ENCODE measurements at regions of chr12 and their contacts with region 1.

Region 1: GRCh38 chr12:12999959-13000615 is at the start of gene HEBP1:
- DNase-seq: peak; percentile 99
- ATAC-seq: peak; percentile 92
- H3K4me3 Mint-ChIP-seq: peak within 1 kb of the TSS; percentile 86
- H3K27ac Mint-ChIP-seq: peak within 1 kb of the TSS; percentile 75
- H3K4me1 Mint-ChIP-seq: peaks cover 28% of the 10 kb centered on the region
- H3K27me3 Mint-ChIP-seq: peaks cover 6% of the 10 kb centered on the region
- total RNA-seq, gene HEBP1: 23.5 to 28.6 TPM

Region 2: GRCh38 chr12:12356886-12357718 is 643.0 kb before region 1 on chr12 and contains the start of gene BORCS5:
- CTCF ChIA-PET with region 1: no interaction called
- POLR2A ChIA-PET with region 1: no interaction called
- intact Hi-C with region 1: loop called in 1 of 2 experiments (anchors 1 kb)
- DNase-seq: peak; percentile 99
- ATAC-seq: peak; percentile 94
- H3K4me3 Mint-ChIP-seq: peak within 1 kb of the TSS; percentile 98
- H3K27ac Mint-ChIP-seq: peak within 1 kb of the TSS; percentile 99
- H3K4me1 Mint-ChIP-seq: peaks cover 38% of the 10 kb centered on the region
- H3K27me3 Mint-ChIP-seq: no peaks in the 10 kb centered on the region
- total RNA-seq, gene BORCS5: 41.8 to 45.0 TPM

Region 3: GRCh38 chr12:12776261-12776660 is 223.8 kb before region 1 on chr12:
- CTCF ChIA-PET with region 1: no interaction called
- POLR2A ChIA-PET with region 1: no interaction called
- intact Hi-C with region 1: no loop called
- DNase-seq: no peak
- ATAC-seq: no peak
- H3K4me3 Mint-ChIP-seq: no peak overlapping the region
- H3K27ac Mint-ChIP-seq: no peak overlapping the region
- H3K4me1 Mint-ChIP-seq: no peaks in the 10 kb centered on the region
- H3K27me3 Mint-ChIP-seq: no peaks in the 10 kb centered on the region

Region 4: DNA sequence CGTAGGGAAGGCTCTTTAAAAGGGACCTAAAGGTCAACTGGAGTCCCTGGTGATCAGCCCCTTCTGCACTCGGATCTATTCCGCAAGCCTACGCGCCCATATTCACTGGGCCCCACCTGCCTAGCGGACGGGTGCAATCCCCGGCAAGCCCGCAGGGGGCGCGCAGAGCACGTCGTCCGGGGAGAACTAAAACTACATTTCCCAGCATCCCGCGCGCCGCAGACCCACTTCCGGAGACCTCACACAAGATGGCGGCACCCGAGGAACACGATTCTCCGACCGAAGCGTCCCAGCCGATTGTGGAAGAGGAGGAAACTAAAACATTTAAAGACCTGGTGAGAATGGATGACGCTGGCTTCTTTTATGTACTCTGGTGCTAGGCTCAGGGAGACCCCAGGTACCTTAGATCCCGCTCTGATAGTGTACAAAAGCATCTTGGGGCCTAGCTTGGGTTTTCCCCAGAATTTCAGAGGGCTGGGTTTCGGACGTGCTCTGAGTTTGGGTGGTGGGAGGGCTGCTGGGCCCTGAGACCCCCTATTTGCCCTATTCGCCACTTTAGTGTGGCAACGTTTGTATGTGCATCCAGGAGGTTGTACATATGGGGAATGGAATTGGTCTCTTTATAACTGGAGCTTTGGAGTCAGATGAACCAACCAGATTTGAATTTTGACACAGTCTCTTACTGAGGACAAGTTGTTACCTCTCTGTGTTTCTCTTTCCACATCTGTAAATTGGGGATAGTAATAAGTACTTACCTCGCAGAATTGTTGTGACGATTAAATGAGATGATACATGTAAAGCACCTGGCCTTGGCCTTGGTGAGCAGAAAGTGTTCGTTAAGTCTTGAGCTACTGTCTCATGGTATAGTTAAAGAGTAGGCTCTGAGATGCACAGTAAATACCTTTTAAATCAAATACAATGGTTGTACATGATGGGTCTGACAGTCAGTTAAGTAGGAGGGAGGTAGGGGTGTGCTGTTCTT is 186.7 kb before region 1 on chr12 and contains the start of gene DDX47:
- CTCF ChIA-PET with region 1: interaction called, 3 read pairs
- POLR2A ChIA-PET with region 1: no interaction called
- intact Hi-C with region 1: loop called (anchors 1 kb)
- DNase-seq: peak; percentile 99
- ATAC-seq: peak; percentile 90
- H3K4me3 Mint-ChIP-seq: peak within 1 kb of the TSS; percentile 95
- H3K27ac Mint-ChIP-seq: peak within 1 kb of the TSS; percentile 91
- H3K4me1 Mint-ChIP-seq: peaks cover 61% of the 10 kb centered on the region
- H3K27me3 Mint-ChIP-seq: no peaks in the 10 kb centered on the region
- total RNA-seq, gene DDX47: 91.3 to 91.9 TPM

Region 5: GRCh38 chr12:12916135-12916944 is 83.7 kb before region 1 on chr12:
- CTCF ChIA-PET with region 1: interaction called, 6 read pairs
- POLR2A ChIA-PET with region 1: no interaction called
- intact Hi-C with region 1: loop called (anchors 1 to 5 kb)
- DNase-seq: peak; percentile 91
- ATAC-seq: peak; percentile 97
- H3K4me3 Mint-ChIP-seq: no peak overlapping the region
- H3K27ac Mint-ChIP-seq: no peak overlapping the region
- H3K4me1 Mint-ChIP-seq: peaks cover 7% of the 10 kb centered on the region
- H3K27me3 Mint-ChIP-seq: peaks cover 12% of the 10 kb centered on the region

Region 6: DNA sequence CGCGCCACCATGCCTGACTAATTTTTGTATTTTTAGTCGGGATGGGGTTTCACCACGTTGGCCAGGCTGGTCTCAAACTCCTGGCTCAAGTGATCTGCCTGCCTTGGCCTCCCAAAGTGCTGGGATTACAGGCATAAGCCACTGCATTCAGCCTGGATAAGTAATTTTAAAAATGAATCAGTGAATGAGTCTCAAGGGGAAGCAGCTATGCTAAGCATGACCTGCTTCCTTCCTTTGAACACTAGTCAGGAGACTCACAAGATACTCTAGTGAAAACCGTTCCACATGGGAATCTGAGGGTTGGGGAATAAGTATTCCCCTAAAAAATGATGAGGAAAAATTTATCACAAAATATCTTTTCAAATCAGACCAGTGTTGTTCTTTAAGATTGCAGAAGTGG is 33.4 kb after region 1 on chr12:
- CTCF ChIA-PET with region 1: no interaction called
- POLR2A ChIA-PET with region 1: no interaction called
- intact Hi-C with region 1: no loop called
- DNase-seq: no peak
- ATAC-seq: no peak
- H3K4me3 Mint-ChIP-seq: no peak overlapping the region
- H3K27ac Mint-ChIP-seq: no peak overlapping the region
- H3K4me1 Mint-ChIP-seq: no peaks in the 10 kb centered on the region
- H3K27me3 Mint-ChIP-seq: no peaks in the 10 kb centered on the region

Region 7: GRCh38 chr12:13100882-13101769 is 101.0 kb after region 1 on chr12:
- CTCF ChIA-PET with region 1: no interaction called
- POLR2A ChIA-PET with region 1: no interaction called
- intact Hi-C with region 1: loop called (anchors 1 kb)
- DNase-seq: peak; percentile 93
- ATAC-seq: peak; percentile 70
- H3K4me3 Mint-ChIP-seq: peak overlapping the region; percentile 63
- H3K27ac Mint-ChIP-seq: peak overlapping the region; percentile 72
- H3K4me1 Mint-ChIP-seq: peaks cover 58% of the 10 kb centered on the region
- H3K27me3 Mint-ChIP-seq: no peaks in the 10 kb centered on the region

Region 8: DNA sequence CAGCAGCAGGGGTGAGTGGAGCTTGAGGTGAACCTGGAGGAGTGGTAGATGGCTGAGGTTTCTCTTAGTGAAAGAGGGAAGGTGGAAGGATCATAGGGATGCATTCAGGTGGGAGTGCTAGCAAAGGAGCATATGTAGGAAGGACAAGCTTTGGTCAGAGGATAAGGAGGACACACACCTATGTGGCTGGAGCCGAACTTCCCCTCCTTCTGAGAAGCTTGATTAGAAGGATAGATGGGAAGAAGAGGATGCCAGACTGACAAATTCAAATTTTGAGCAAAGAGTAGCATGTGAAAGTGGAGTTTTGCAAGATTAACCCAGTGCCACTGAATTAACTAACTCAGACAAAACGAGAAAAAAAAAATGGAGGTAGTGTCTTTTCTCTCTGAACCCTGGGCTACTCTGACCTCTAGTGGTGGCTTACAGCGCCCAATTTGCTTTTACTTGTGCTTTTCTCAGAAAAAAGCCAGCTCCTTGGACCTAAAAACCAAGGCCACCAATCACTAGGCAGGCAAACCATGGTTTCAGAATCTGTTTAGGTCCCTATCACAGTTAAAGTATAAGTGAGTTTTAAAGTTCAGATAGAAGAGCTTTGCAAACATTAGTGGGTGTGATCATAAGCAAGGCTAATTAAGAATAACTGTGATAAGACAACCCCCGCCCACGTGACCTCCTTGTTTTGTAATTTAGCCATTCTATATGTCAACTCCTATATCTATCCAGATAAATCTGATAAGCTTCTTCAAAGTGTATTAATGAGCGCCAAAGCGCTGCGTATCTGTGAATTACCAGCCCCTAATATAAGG is 212.0 kb after region 1 on chr12:
- CTCF ChIA-PET with region 1: interaction called, 9 read pairs
- POLR2A ChIA-PET with region 1: no interaction called
- intact Hi-C with region 1: loop called (anchors 1 to 2 kb)
- DNase-seq: peak; percentile 84
- ATAC-seq: peak; percentile 59
- H3K4me3 Mint-ChIP-seq: no peak overlapping the region
- H3K27ac Mint-ChIP-seq: peak overlapping the region; percentile 49
- H3K4me1 Mint-ChIP-seq: peaks cover 29% of the 10 kb centered on the region
- H3K27me3 Mint-ChIP-seq: no peaks in the 10 kb centered on the region